BJ (cell line): ENCODE measurements at regions of chr1 and their contacts with region 1.

Region 1: DNA sequence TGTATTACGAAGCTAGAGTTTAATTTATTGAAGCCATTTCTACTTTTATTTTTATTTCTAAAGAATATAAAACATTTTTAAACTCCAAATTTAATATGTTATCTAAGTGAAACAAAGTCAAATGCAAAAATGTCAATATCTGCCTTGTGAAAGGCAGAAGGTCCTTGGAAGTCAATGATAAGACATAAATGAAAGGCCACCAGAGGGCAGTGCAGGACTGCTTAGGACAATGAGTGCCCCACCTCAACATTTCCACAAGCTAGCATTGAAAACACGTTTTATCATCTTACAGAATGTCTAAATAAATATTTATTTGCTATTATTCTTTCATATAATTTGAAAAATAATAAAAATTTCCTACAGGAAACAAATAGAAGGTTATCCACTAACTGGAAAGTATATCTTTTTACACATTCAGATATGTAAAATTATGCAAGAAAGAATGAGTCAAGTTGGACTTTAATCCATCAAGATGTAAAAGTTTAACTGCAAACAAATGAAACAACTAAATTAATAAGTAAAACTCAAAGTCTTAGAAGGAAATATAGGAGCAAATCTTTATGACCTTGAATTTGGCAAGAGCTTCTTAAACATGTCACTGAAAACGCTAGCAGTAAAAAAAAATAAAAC is 140.1 kb upstream of the FMN2 start:
- DNase-seq: no peak
- H3K4me3 ChIP-seq: no peak overlapping the region
- H3K27me3 ChIP-seq: no peaks in the 10 kb centered on the region; the same call in 1 of the 2 replicates
- CTCF ChIP-seq: peak; percentile 71

Region 2: DNA sequence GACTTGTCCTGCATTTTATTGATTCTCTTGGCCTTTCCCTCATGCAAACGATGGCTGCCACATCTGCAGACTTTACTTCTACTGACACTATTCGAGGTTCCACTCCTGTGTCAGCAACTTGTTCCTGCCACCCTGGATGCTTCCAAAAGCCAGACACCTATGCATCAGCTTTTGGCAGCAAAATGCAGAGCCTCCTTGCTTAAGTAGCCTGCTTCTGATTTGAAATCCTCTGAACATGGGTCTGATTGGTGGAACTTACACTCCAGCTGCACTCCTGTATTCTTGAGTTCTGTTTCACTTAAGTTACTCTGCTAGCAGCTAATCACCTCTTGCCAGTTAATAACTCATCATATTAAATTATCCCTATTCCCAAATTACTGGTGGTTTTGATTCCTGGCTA is 12.0 kb before region 1 on chr1:
- CTCF ChIA-PET with region 1: interaction called, 27 read pairs
- POLR2A ChIA-PET with region 1: no interaction called
- DNase-seq: no peak
- H3K4me3 ChIP-seq: no peak overlapping the region
- H3K27me3 ChIP-seq: no peaks in the 10 kb centered on the region
- CTCF ChIP-seq: no peak

Region 3: DNA sequence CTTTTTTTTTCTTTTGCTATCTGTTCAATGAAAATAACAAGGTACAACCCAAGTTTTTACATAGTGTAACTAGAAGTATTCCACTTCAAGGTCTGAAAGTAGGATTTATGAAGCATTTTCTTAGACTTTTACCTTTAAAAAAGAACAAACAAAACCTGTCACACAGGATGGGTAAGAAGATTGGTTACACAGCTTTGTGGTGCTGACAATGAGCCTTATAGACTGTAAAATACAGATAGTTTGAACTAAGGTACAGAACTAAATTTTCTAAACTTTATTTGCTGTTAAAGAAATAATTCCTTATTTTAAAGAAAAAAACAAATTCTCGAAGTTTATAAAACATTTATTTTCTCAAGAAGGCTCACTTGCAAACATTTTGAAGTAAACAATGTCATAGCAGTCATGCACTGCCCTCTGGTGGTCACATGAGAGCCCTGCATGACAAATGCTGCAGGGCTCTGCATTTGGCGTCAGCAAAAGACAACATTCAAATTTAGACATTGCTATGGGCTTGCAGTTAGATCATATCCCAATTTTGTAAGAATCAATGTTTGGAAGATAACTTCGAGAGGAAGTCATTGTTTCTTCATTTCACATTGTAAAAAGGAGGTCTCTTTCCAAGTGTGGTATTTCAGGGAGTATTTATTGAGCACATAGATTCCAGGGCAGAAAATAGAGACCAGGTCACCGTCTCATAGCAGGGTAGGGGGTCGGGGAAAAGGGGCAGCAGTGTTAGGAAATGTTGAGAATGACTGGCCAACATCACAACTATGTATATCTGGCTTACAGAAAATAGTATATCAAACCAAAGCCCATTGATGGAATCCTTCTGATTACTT is 24.7 kb after region 1 on chr1:
- CTCF ChIA-PET with region 1: interaction called, 146 read pairs
- POLR2A ChIA-PET with region 1: no interaction called
- DNase-seq: no peak
- H3K4me3 ChIP-seq: no peak overlapping the region
- H3K27me3 ChIP-seq: peaks cover 2% of the 10 kb centered on the region; the same call in 1 of the 2 replicates
- CTCF ChIP-seq: peak; percentile 99

Region 4: GRCh38 chr1:239987103-239987745 is 35.6 kb after region 1 on chr1:
- CTCF ChIA-PET with region 1: interaction called, 35 read pairs
- POLR2A ChIA-PET with region 1: no interaction called
- DNase-seq: no peak
- H3K4me3 ChIP-seq: no peak overlapping the region
- H3K27me3 ChIP-seq: peaks cover 16% of the 10 kb centered on the region
- CTCF ChIP-seq: peak; percentile 78

Region 5: DNA sequence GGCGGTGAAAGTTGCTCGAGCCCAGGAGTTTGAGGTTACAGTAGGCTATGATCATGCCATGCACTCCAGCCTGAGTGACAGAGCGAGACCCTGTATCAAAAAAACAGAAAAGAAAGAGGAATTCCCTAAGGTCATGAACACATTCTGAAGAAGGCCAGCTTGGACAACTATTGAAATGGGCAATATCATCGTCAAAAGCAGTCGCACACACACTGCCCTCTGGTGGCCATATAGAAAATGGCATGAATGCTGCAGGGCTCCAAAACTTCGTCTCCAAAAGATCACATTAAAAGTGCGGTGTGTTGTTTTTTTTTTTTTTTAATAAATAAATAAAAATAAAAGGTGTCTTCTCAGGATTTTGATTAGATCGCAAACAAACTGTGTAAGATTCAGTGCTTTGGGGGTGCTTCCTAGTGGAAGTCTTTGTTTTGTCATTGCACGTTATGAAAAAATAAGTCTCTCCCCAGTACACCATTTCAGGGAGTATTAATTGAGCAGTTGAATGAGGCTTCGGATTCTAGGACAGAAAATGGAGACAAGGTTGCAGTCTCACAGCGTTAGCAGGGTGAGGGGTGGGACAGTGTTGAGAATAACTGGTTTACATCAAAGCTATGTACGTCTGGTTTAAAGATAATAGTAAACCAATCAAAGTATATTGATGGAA is 52.6 kb after region 1 on chr1:
- CTCF ChIA-PET with region 1: interaction called, 27 read pairs
- POLR2A ChIA-PET with region 1: no interaction called
- DNase-seq: no peak
- H3K4me3 ChIP-seq: no peak overlapping the region
- H3K27me3 ChIP-seq: peaks cover 5% of the 10 kb centered on the region
- CTCF ChIP-seq: peak; percentile 84